Endothelial cell of umbilical vein (primary cell): ENCODE measurements at regions of chr6 and their contacts with region 1.

Region 1: GRCh38 chr6:142378138-142378875 is 76.5 kb downstream of the ADGRG6 start:
- DNase-seq: peak; percentile 96
- H3K4me3 ChIP-seq: no peak overlapping the region
- H3K27ac ChIP-seq: peak overlapping the region; percentile 85
- H3K4me1 ChIP-seq: peaks cover 58% of the 10 kb centered on the region
- H3K27me3 ChIP-seq: no peaks in the 10 kb centered on the region
- CTCF ChIP-seq: no peak
- POLR2A ChIP-seq: peak; percentile 46

Region 2: GRCh38 chr6:142331075-142331551 is 47.2 kb before region 1 on chr6:
- CTCF ChIA-PET with region 1: interaction called, 6 read pairs
- POLR2A ChIA-PET with region 1: interaction called, 4 read pairs
- dilution Hi-C with region 1: no loop called
- intact Hi-C with region 1: loop called (anchors 1 kb)
- DNase-seq: peak; percentile 81
- H3K4me3 ChIP-seq: peak overlapping the region in 1 of 3 experiments; percentile 23
- H3K27ac ChIP-seq: peak overlapping the region; percentile 96
- H3K4me1 ChIP-seq: peaks cover 68% of the 10 kb centered on the region
- H3K27me3 ChIP-seq: no peaks in the 10 kb centered on the region
- CTCF ChIP-seq: no peak
- POLR2A ChIP-seq: no peak

Region 3: GRCh38 chr6:142343938-142344337 is 34.4 kb before region 1 on chr6:
- CTCF ChIA-PET with region 1: interaction called, 4 read pairs
- POLR2A ChIA-PET with region 1: no interaction called
- dilution Hi-C with region 1: no loop called
- intact Hi-C with region 1: loop called (anchors 1 kb)
- DNase-seq: peak; percentile 79
- H3K4me3 ChIP-seq: no peak overlapping the region
- H3K27ac ChIP-seq: no peak overlapping the region
- H3K4me1 ChIP-seq: peaks cover 20% of the 10 kb centered on the region
- H3K27me3 ChIP-seq: no peaks in the 10 kb centered on the region
- CTCF ChIP-seq: no peak
- POLR2A ChIP-seq: no peak

Region 4: GRCh38 chr6:142395768-142396231 is 17.5 kb after region 1 on chr6:
- CTCF ChIA-PET with region 1: interaction called, 4 read pairs
- POLR2A ChIA-PET with region 1: interaction called, 3 read pairs
- dilution Hi-C with region 1: no loop called
- intact Hi-C with region 1: loop called (anchors 1 kb)
- DNase-seq: peak; percentile 94
- H3K4me3 ChIP-seq: no peak overlapping the region
- H3K27ac ChIP-seq: peak overlapping the region; percentile 99
- H3K4me1 ChIP-seq: peaks cover 47% of the 10 kb centered on the region
- H3K27me3 ChIP-seq: no peaks in the 10 kb centered on the region
- CTCF ChIP-seq: no peak
- POLR2A ChIP-seq: no peak

Region 5: DNA sequence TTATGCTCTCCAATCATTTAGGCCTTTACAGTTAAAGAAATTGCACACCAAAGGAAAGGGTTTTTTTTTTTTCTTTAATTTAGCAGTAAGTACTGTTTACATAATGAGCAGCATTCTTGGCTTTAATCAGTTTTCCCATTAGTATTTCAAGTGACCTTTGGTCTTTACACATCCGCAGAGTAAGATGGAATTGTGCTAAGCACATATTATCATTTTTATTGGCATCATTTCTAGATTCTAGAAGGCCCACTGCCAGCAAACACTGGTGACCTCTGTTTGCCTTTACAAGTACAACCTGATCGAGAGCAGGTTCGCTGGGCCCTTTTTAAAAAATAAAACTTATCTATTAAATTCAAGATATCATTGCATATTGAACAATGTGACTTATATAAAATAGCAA is 27.8 kb after region 1 on chr6:
- CTCF ChIA-PET with region 1: interaction called, 4 read pairs
- POLR2A ChIA-PET with region 1: interaction called, 3 read pairs
- dilution Hi-C with region 1: no loop called
- intact Hi-C with region 1: loop called (anchors 1 kb)
- DNase-seq: peak; percentile 99
- H3K4me3 ChIP-seq: no peak overlapping the region
- H3K27ac ChIP-seq: peak overlapping the region; percentile 97
- H3K4me1 ChIP-seq: peaks cover 69% of the 10 kb centered on the region
- H3K27me3 ChIP-seq: no peaks in the 10 kb centered on the region
- CTCF ChIP-seq: no peak
- POLR2A ChIP-seq: peak; percentile 41

Region 6: GRCh38 chr6:142416179-142416578 is 37.9 kb after region 1 on chr6:
- CTCF ChIA-PET with region 1: no interaction called
- POLR2A ChIA-PET with region 1: no interaction called
- dilution Hi-C with region 1: no loop called
- intact Hi-C with region 1: loop called (anchors 1 kb)
- DNase-seq: peak; percentile 93
- H3K4me3 ChIP-seq: no peak overlapping the region
- H3K27ac ChIP-seq: peak overlapping the region; percentile 99
- H3K4me1 ChIP-seq: peaks cover 56% of the 10 kb centered on the region
- H3K27me3 ChIP-seq: no peaks in the 10 kb centered on the region
- CTCF ChIP-seq: no peak
- POLR2A ChIP-seq: peak; percentile 22

Region 7: DNA sequence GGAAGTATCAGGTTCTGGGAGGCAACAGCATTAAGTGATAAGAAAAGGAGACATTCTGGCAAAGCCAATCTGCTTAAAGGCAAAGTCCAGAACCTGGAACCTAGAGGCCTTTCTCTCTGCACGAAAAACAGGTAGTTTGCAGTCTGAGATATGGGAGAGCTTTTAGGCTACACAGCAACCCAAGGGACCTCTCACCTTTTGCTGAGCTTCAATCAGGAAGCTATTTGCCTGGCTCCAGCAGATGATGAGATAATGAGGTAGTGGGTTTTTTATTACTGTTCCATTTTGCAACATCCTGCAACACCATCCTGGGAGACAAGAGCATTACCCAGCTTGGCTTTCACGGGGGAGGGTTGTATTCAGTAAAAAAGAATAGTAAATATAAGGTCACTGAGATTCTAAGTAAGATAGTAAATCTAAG is 66.6 kb after region 1 on chr6:
- CTCF ChIA-PET with region 1: no interaction called
- POLR2A ChIA-PET with region 1: no interaction called
- dilution Hi-C with region 1: no loop called
- intact Hi-C with region 1: no loop called
- DNase-seq: no peak
- H3K4me3 ChIP-seq: no peak overlapping the region
- H3K27ac ChIP-seq: no peak overlapping the region
- H3K4me1 ChIP-seq: no peaks in the 10 kb centered on the region
- H3K27me3 ChIP-seq: no peaks in the 10 kb centered on the region
- CTCF ChIP-seq: no peak
- POLR2A ChIP-seq: no peak